HCT116 (cell line): ENCODE measurements at regions of chr11 and their contacts with region 1.

Region 1: DNA sequence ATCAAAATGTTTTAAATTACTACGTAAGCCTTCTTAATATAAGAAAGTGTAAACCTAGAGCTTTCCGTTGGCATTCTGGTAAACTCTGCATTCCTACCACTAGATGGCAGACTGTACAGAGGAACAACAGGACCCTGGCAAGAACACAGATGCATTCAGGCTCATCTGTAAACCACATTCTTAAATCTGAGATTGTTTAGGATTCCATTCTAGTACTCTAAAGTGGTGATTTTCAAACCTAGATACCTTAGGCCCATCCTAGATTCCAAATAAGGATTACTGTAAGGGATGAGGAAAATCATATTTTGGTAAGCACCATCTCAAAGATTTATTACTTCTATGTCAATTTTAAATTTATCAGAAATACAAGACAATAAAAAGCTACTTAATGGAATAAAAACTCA is 26.9 kb downstream of the PICALM start:
- DNase-seq: peak; percentile 76
- ATAC-seq: peak; percentile 86
- H3K4me3 ChIP-seq: no peak overlapping the region
- H3K27ac ChIP-seq: no peak overlapping the region
- H3K4me1 ChIP-seq: peaks cover 0 to 7% of the 10 kb centered on the region in 2 experiments; a peak in 3 of 4 replicates
- H3K27me3 ChIP-seq: no peaks in the 10 kb centered on the region
- CTCF ChIP-seq: peak; percentile 78 to 96 (median 79); a peak in 5 of 6 replicates
- POLR2A ChIP-seq: no peak
- RAD21 ChIP-seq: peak; percentile 84

Region 2: DNA sequence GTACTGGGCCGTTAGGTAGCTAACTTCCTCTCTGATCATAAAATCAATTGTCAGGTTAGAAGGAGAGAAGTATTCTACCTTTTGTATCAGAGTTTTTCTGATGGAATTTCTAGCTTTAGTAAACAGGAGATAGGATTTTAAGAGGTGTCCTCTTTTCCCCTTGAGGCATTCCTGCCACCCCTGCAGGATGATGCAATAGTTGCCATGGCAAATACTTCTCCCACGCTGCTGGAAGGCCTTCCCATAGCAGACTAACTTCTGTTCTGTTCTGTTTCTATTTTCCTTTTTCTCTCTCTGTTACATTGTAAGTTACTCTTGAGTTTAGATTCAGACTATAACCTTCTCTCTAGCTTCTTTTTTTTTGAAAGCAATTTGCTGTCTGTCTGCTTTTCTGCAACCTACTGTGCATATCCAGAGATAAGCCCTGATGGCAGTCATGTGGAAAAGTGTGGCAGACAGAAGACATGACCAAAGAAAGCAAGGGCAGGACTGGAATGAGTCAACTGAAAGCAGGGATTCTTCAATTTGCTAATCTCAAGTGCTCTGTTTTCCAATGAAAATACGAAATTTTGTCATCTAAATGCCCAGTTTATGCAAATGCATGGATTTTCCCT is 1093.9 kb before region 1 on chr11:
- CTCF ChIA-PET with region 1: no interaction called
- POLR2A ChIA-PET with region 1: no interaction called
- RAD21 ChIA-PET with region 1: no interaction called
- intact Hi-C with region 1: no loop called
- DNase-seq: no peak
- ATAC-seq: no peak
- H3K4me3 ChIP-seq: no peak overlapping the region
- H3K27ac ChIP-seq: no peak overlapping the region
- H3K4me1 ChIP-seq: no peaks in the 10 kb centered on the region
- H3K27me3 ChIP-seq: no peaks in the 10 kb centered on the region
- CTCF ChIP-seq: no peak
- POLR2A ChIP-seq: no peak
- RAD21 ChIP-seq: no peak

Region 3: GRCh38 chr11:85672105-85672902 is 369.7 kb before region 1 on chr11:
- CTCF ChIA-PET with region 1: no interaction called
- POLR2A ChIA-PET with region 1: no interaction called
- RAD21 ChIA-PET with region 1: no interaction called
- intact Hi-C with region 1: no loop called
- DNase-seq: no peak
- ATAC-seq: no peak
- H3K4me3 ChIP-seq: no peak overlapping the region
- H3K27ac ChIP-seq: no peak overlapping the region
- H3K4me1 ChIP-seq: no peaks in the 10 kb centered on the region
- H3K27me3 ChIP-seq: no peaks in the 10 kb centered on the region
- CTCF ChIP-seq: no peak
- POLR2A ChIP-seq: no peak
- RAD21 ChIP-seq: no peak

Region 4: GRCh38 chr11:86021377-86021776 is 20.6 kb before region 1 on chr11:
- CTCF ChIA-PET with region 1: interaction called, 17 read pairs
- POLR2A ChIA-PET with region 1: no interaction called
- RAD21 ChIA-PET with region 1: no interaction called
- intact Hi-C with region 1: no loop called
- DNase-seq: no peak
- ATAC-seq: no peak
- H3K4me3 ChIP-seq: no peak overlapping the region
- H3K27ac ChIP-seq: no peak overlapping the region
- H3K4me1 ChIP-seq: no peaks in the 10 kb centered on the region
- H3K27me3 ChIP-seq: no peaks in the 10 kb centered on the region
- CTCF ChIP-seq: no peak
- POLR2A ChIP-seq: no peak
- RAD21 ChIP-seq: no peak

Region 5: DNA sequence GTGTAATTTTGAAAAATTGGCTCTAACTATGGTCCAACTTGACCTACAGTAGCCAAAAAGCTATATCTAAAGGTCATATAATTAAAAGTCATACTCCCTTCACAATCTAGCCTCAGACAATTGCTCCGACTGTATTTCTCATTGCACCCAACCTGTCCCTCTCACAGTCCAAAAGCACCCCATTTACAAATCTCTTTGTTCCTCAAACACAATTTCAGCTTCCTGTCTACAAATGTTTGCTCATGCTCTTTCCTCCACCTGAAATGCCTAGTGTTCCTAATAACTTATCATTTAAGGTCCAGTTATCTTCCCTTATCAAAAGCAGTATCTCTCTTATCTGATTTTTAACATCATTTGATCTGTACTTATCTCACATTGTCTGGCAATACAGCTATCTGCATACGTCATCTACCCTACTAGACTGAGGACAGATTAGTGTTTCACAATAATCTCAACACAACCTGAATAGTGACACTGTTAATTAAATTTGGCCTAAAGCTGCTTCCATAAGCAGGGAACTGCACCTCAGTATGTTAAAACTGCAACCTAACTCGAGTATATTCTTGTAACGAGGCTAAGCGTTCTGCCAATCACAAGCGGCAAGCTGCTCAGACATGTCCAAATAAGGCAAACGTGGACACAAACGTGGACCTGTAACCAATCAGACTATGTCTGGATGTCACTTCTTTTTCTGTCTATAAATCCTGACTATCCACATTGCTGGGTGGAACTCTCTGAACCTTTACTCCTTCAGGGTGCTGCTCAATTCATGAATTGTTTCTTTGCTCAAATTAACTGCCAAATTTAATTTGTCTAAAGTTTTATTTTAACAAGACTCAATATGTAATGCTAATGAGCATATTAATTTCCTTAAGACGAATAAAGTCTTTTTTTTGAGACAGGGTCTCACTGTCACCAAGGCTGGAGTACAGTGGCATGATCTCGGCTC is 11.0 kb after region 1 on chr11:
- CTCF ChIA-PET with region 1: interaction called, 27 read pairs
- POLR2A ChIA-PET with region 1: no interaction called
- RAD21 ChIA-PET with region 1: no interaction called
- intact Hi-C with region 1: no loop called
- DNase-seq: no peak
- ATAC-seq: no peak
- H3K4me3 ChIP-seq: no peak overlapping the region
- H3K27ac ChIP-seq: no peak overlapping the region
- H3K4me1 ChIP-seq: no peaks in the 10 kb centered on the region
- H3K27me3 ChIP-seq: no peaks in the 10 kb centered on the region
- CTCF ChIP-seq: no peak
- POLR2A ChIP-seq: no peak
- RAD21 ChIP-seq: no peak

Region 6: DNA sequence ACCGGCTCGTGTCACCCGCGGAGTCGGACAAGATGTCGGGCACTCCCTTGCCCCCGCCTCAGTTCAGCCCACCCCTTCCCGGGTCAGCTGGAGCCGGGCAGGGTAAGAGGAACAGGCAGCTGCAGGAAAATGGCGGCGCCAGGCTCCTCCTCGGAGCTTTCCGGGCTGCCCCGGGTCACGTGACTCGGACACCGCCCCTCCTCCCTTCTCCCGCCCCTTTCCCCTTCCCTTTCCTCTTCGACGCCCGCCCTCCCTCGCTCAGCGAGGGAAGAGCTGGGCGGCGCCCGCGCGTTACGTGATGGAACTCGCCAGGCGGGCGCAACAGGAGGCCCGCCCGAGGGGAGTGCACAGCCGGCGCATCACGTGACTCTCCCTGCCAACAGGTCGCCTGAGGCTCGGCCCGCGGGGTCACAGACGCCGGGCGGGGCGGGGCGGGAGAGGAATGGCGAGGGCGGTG is 27.0 kb after region 1 on chr11 and contains the start of gene PICALM:
- CTCF ChIA-PET with region 1: interaction called, 13 read pairs
- POLR2A ChIA-PET with region 1: interaction called, 4 read pairs
- RAD21 ChIA-PET with region 1: no interaction called
- intact Hi-C with region 1: no loop called
- DNase-seq: peak; percentile 96
- ATAC-seq: peak; percentile 92
- H3K4me3 ChIP-seq: peak within 1 kb of the TSS; percentile 75 to 86
- H3K27ac ChIP-seq: peak within 1 kb of the TSS; percentile 71
- H3K4me1 ChIP-seq: peaks cover 24 to 35% of the 10 kb centered on the region in 2 experiments
- H3K27me3 ChIP-seq: no peaks in the 10 kb centered on the region
- CTCF ChIP-seq: no peak
- POLR2A ChIP-seq: no peak
- RAD21 ChIP-seq: no peak; the same call in 1 of the 2 replicates
- total RNA-seq, gene PICALM: 90.6 TPM

Region 7: DNA sequence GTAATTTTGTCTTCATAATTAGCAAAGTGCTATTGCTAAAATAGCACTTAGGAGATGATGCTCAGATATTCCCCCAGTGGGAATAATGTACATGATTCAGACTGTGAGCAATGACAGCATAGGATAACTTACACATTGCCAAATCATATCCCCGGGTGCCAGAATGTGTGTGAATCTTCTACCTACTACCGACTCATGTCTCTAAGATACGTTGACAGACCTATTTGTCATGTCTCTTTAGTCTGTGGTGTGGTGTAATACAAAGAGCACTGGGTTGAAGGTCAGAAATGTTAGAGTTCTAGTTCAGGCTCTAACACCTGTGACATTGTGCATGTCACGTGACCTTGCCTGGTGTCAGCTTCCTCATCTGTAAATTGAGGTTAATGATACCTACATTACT is 57.9 kb after region 1 on chr11:
- CTCF ChIA-PET with region 1: no interaction called
- POLR2A ChIA-PET with region 1: no interaction called
- RAD21 ChIA-PET with region 1: no interaction called
- intact Hi-C with region 1: no loop called
- DNase-seq: no peak
- ATAC-seq: no peak
- H3K4me3 ChIP-seq: no peak overlapping the region
- H3K27ac ChIP-seq: no peak overlapping the region
- H3K4me1 ChIP-seq: no peaks in the 10 kb centered on the region
- H3K27me3 ChIP-seq: no peaks in the 10 kb centered on the region
- CTCF ChIP-seq: no peak
- POLR2A ChIP-seq: no peak
- RAD21 ChIP-seq: no peak

Region 8: GRCh38 chr11:86193297-86194095 is 151.5 kb after region 1 on chr11:
- CTCF ChIA-PET with region 1: interaction called, 36 read pairs
- POLR2A ChIA-PET with region 1: no interaction called
- RAD21 ChIA-PET with region 1: interaction called, 4 to 5 read pairs
- intact Hi-C with region 1: loop called (anchors 1 kb)
- DNase-seq: peak; percentile 86
- ATAC-seq: peak; percentile 100
- H3K4me3 ChIP-seq: peak overlapping the region; percentile 20 to 32; a peak in 3 of 4 replicates
- H3K27ac ChIP-seq: no peak overlapping the region
- H3K4me1 ChIP-seq: peaks cover 4 to 22% of the 10 kb centered on the region in 2 experiments; a peak in 3 of 4 replicates
- H3K27me3 ChIP-seq: no peaks in the 10 kb centered on the region
- CTCF ChIP-seq: peak; percentile 80 to 85 (median 84); a peak in 5 of 6 replicates
- POLR2A ChIP-seq: no peak
- RAD21 ChIP-seq: peak; percentile 86

Region 9: GRCh38 chr11:86218125-86219084 is 176.4 kb after region 1 on chr11:
- CTCF ChIA-PET with region 1: interaction called, 7 read pairs
- POLR2A ChIA-PET with region 1: no interaction called
- RAD21 ChIA-PET with region 1: no interaction called
- intact Hi-C with region 1: loop called (anchors 5 kb)
- DNase-seq: peak; percentile 66
- ATAC-seq: peak; percentile 96
- H3K4me3 ChIP-seq: peak overlapping the region; percentile 28 to 50
- H3K27ac ChIP-seq: no peak overlapping the region
- H3K4me1 ChIP-seq: peaks cover 0 to 10% of the 10 kb centered on the region in 2 experiments; a peak in 1 of 4 replicates
- H3K27me3 ChIP-seq: no peaks in the 10 kb centered on the region
- CTCF ChIP-seq: peak; percentile 71 to 92 (median 87); a peak in 5 of 6 replicates
- POLR2A ChIP-seq: no peak
- RAD21 ChIP-seq: peak; percentile 81

Region 10: GRCh38 chr11:86274503-86274902 is 232.5 kb after region 1 on chr11:
- CTCF ChIA-PET with region 1: interaction called, 3 read pairs
- POLR2A ChIA-PET with region 1: no interaction called
- RAD21 ChIA-PET with region 1: no interaction called
- intact Hi-C with region 1: loop called (anchors 10 kb)
- DNase-seq: no peak
- ATAC-seq: peak; percentile 77
- H3K4me3 ChIP-seq: no peak overlapping the region
- H3K27ac ChIP-seq: no peak overlapping the region
- H3K4me1 ChIP-seq: no peaks in the 10 kb centered on the region
- H3K27me3 ChIP-seq: no peaks in the 10 kb centered on the region
- CTCF ChIP-seq: peak; percentile 3 to 57 (median 51); a peak in 4 of 6 replicates
- POLR2A ChIP-seq: no peak
- RAD21 ChIP-seq: no peak

Region 11: GRCh38 chr11:86291466-86292262 is 249.7 kb after region 1 on chr11:
- CTCF ChIA-PET with region 1: no interaction called
- POLR2A ChIA-PET with region 1: no interaction called
- RAD21 ChIA-PET with region 1: no interaction called
- intact Hi-C with region 1: no loop called
- DNase-seq: peak; percentile 39
- ATAC-seq: peak; percentile 74
- H3K4me3 ChIP-seq: no peak overlapping the region
- H3K27ac ChIP-seq: no peak overlapping the region
- H3K4me1 ChIP-seq: no peaks in the 10 kb centered on the region
- H3K27me3 ChIP-seq: no peaks in the 10 kb centered on the region
- CTCF ChIP-seq: peak; percentile 76 to 86 (median 77)
- POLR2A ChIP-seq: no peak
- RAD21 ChIP-seq: peak; percentile 85